CD8-positive, alpha-beta T cell (primary cell): ENCODE measurements at regions of chr9 and their contacts with region 1.

Region 1: DNA sequence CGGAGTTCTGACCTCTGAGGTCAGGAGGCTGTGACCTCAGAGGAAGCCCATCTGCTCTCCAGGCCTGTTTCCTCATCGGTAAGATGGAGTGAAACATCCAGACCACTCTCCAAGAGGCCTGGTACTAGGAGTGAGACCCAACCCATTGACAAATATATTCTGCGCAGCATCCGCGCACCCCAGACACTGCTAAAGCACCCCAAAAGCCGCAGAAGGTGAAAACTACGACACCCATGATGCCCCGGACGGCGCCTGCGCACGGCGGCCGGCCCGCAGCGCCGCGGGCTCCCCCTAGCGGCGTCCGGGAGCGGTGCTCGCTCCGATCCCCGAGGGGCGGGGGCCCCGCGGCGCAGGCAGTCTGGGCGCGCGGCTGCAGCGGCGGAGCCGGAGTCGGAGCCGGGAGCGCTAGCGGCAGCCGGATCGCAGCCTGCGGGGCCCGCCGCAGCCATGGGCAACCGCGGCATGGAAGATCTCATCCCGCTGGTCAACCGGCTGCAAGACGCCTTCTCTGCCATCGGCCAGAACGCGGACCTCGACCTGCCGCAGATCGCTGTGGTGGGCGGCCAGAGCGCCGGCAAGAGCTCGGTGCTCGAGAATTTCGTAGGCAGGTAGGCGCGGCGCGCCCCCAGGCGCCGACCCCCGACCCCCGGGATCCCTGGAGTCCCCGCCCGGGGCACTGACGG is at the start of gene DNM1:
- DNase-seq: peak; percentile 52 to 88 (median 67)
- ATAC-seq: peak; percentile 99
- H3K4me3 ChIP-seq: peak within 1 kb of the TSS; percentile 55 to 66
- H3K4me3 Mint-ChIP-seq: peak within 1 kb of the TSS; percentile 72
- H3K27ac ChIP-seq: no peak within 1 kb of the TSS
- H3K27ac Mint-ChIP-seq: no peak within 1 kb of the TSS
- H3K4me1 ChIP-seq: peaks cover 13% of the 10 kb centered on the region
- H3K4me1 Mint-ChIP-seq: peaks cover 9% of the 10 kb centered on the region
- H3K27me3 ChIP-seq: peaks cover 3 to 9% of the 10 kb centered on the region in 2 experiments
- H3K27me3 Mint-ChIP-seq: peaks cover 10% of the 10 kb centered on the region
- CTCF ChIP-seq: peak; percentile 85
- total RNA-seq, gene DNM1: 1.4 to 1.5 TPM

Region 2: GRCh38 chr9:127930231-127931091 is 272.7 kb before region 1 on chr9 and contains the start of gene PIP5KL1:
- CTCF ChIA-PET with region 1: no interaction called
- POLR2A ChIA-PET with region 1: no interaction called
- intact Hi-C with region 1: no loop called
- DNase-seq: peak; percentile 45 to 83 (median 68)
- ATAC-seq: peak; percentile 60
- H3K4me3 ChIP-seq: peak within 1 kb of the TSS; percentile 40 to 53
- H3K4me3 Mint-ChIP-seq: peak within 1 kb of the TSS; percentile 69
- H3K27ac ChIP-seq: no peak within 1 kb of the TSS
- H3K27ac Mint-ChIP-seq: peak within 1 kb of the TSS; percentile 71
- H3K4me1 ChIP-seq: peaks cover 36% of the 10 kb centered on the region
- H3K4me1 Mint-ChIP-seq: peaks cover 35% of the 10 kb centered on the region
- H3K27me3 ChIP-seq: peaks cover 0 to 5% of the 10 kb centered on the region in 2 experiments
- H3K27me3 Mint-ChIP-seq: no peaks in the 10 kb centered on the region
- CTCF ChIP-seq: no peak
- total RNA-seq, gene PIP5KL1: 5.1 to 7.4 TPM

Region 3: GRCh38 chr9:127963359-127964064 is 239.7 kb before region 1 on chr9:
- CTCF ChIA-PET with region 1: no interaction called
- POLR2A ChIA-PET with region 1: no interaction called
- intact Hi-C with region 1: loop called in 1 of 2 experiments (anchors 5 kb)
- DNase-seq: peak in 1 of 9 experiments; percentile 50
- ATAC-seq: peak; percentile 12
- H3K4me3 ChIP-seq: peak overlapping the region in 1 of 2 experiments; percentile 42
- H3K4me3 Mint-ChIP-seq: peak overlapping the region; percentile 88
- H3K27ac ChIP-seq: peak overlapping the region; percentile 25 to 49
- H3K27ac Mint-ChIP-seq: peak overlapping the region; percentile 99
- H3K4me1 ChIP-seq: peaks cover 100% of the 10 kb centered on the region
- H3K4me1 Mint-ChIP-seq: peaks cover 96% of the 10 kb centered on the region
- H3K27me3 ChIP-seq: no peaks in the 10 kb centered on the region
- H3K27me3 Mint-ChIP-seq: no peaks in the 10 kb centered on the region
- CTCF ChIP-seq: no peak

Region 4: DNA sequence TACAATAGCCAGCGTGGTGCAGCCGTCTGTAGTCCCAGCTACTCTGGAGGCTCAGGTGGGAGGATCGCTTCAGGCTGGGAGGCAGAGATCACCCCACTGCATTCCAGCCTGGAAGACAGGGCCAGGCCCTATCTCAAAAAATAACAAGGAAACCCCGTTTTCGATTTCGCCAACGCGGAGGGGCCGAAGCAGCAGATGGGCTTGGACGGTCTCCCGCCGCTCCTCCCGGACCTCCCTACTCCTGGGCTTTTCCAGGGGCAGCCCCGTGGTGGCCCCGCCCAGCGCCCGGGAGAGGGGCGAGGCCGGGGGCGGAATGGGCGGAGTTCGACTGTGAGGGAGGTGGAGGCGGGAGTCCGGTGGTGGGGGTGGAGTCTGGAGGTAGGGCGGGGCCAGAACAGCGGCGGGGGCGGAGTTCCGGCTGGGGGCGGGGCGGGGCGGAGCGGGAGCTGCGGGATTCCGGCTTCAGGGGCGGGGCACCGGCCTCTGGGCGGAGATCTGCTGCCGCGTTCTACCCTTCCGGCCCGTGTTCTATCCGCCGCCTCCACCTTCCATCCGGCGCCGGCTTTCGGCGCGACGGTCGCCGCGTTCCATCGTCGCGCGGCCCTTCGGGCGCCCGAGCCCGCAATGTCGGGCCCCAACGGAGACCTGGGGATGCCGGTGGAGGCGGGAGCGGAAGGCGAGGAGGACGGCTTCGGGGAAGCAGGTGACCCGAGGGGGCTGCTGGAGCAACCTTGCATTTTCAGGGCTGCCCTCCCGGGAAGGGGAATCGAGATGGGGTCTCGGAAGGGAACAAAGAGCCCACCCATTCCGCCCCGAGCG is 43.2 kb before region 1 on chr9 and contains the start of gene BBLN:
- CTCF ChIA-PET with region 1: interaction called, 3 read pairs
- POLR2A ChIA-PET with region 1: no interaction called
- intact Hi-C with region 1: loop called (anchors 1 kb)
- DNase-seq: peak; percentile 87 to 95 (median 93)
- ATAC-seq: peak; percentile 87
- H3K4me3 ChIP-seq: peak within 1 kb of the TSS; percentile 90 to 94
- H3K4me3 Mint-ChIP-seq: peak within 1 kb of the TSS; percentile 79
- H3K27ac ChIP-seq: peak within 1 kb of the TSS; percentile 70 to 86
- H3K27ac Mint-ChIP-seq: peak within 1 kb of the TSS; percentile 90
- H3K4me1 ChIP-seq: peaks cover 19% of the 10 kb centered on the region
- H3K4me1 Mint-ChIP-seq: peaks cover 17% of the 10 kb centered on the region
- H3K27me3 ChIP-seq: no peaks in the 10 kb centered on the region
- H3K27me3 Mint-ChIP-seq: no peaks in the 10 kb centered on the region
- CTCF ChIP-seq: no peak
- total RNA-seq, gene BBLN: 56.6 to 67.4 TPM

Region 5: DNA sequence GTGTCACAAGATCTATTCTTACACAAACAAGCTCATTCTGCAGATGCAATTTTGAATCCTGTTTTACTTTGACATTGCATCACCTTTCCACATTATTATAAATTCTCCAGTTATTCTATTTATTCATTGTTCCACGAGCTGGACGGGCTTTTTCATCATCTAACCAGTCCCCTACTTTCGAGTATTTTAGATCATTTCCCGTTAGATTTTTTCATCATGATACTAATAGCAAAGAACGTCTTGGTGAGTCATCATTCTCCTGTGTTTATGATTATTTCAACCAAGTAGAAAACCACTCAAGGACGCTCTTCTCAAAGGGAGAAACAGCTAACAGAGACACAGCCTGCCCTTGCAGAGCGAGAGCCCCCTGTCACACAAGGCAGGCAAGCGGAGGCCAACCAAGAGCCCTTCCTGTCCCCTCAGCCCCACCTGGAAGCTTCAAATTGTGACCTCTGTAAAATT is 28.0 kb before region 1 on chr9:
- CTCF ChIA-PET with region 1: no interaction called
- POLR2A ChIA-PET with region 1: no interaction called
- intact Hi-C with region 1: no loop called
- DNase-seq: no peak
- ATAC-seq: no peak
- H3K4me3 ChIP-seq: no peak overlapping the region
- H3K4me3 Mint-ChIP-seq: no peak overlapping the region
- H3K27ac ChIP-seq: no peak overlapping the region
- H3K27ac Mint-ChIP-seq: no peak overlapping the region
- H3K4me1 ChIP-seq: no peaks in the 10 kb centered on the region
- H3K4me1 Mint-ChIP-seq: no peaks in the 10 kb centered on the region
- H3K27me3 ChIP-seq: no peaks in the 10 kb centered on the region
- H3K27me3 Mint-ChIP-seq: no peaks in the 10 kb centered on the region
- CTCF ChIP-seq: no peak

Region 6: DNA sequence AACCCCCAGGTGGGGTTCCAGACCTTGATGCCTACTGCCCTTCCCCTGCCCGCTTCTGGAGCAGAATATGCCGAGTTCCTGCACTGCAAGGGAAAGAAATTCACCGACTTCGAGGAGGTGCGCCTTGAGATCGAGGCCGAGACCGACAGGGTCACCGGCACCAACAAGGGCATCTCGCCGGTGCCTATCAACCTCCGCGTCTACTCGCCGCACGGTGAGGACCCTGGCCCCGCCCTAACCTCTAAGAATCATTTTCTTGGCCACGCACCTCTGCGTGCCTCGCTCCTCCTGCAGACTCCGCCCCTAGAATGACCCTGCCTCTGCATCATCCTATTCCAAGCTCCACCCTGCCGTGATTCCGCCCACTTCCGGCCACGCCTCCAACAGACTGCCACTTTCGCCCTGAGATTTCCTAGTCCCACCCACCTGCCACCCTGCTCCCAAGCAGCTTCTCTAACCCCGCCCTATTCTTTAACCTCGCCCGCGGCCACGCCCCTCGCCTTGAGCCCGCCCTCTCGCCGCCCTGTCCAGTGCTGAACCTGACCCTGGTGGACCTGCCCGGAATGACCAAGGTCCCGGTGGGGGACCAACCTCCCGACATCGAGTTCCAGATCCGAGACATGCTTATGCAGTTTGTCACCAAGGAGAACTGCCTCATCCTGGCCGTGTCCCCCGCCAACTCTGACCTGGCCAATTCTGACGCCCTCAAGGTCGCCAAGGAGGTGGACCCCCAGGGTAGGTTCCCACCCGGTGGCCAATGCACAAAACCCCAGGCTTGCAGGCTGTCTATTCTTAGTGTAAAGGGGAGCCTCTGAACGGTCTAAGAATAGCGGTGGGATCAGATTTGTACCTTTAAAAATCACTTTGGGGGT is 15.6 kb after region 1 on chr9:
- CTCF ChIA-PET with region 1: interaction called, 4 read pairs
- POLR2A ChIA-PET with region 1: no interaction called
- intact Hi-C with region 1: loop called in 1 of 2 experiments (anchors 1 kb)
- DNase-seq: peak; percentile 80 to 94 (median 90)
- ATAC-seq: peak; percentile 96
- H3K4me3 ChIP-seq: peak overlapping the region; percentile 57 to 64
- H3K4me3 Mint-ChIP-seq: peak overlapping the region; percentile 77
- H3K27ac ChIP-seq: no peak overlapping the region
- H3K27ac Mint-ChIP-seq: peak overlapping the region; percentile 19
- H3K4me1 ChIP-seq: peaks cover 14% of the 10 kb centered on the region
- H3K4me1 Mint-ChIP-seq: peaks cover 11% of the 10 kb centered on the region
- H3K27me3 ChIP-seq: no peaks in the 10 kb centered on the region
- H3K27me3 Mint-ChIP-seq: peaks cover 4% of the 10 kb centered on the region
- CTCF ChIP-seq: no peak

Region 7: DNA sequence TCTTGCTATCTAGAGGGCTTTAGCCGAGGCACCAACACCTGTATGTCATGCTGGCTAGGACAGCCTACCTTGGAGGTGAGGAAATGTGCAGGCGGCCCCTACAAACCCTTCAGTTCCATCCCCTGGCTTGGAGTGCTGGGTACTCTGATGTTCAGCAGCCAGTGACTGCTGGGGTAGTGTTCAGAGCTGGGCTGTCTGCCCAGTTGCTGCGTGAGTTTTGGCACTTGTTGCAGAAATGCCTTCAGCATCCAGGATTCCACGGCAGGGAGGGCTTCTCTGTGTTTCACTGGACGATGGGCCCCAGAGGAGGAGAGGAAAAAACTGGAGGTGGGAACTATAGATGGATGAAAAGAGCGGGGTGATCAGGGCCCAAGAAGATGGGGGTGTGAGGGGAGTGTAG is 83.3 kb after region 1 on chr9:
- CTCF ChIA-PET with region 1: no interaction called
- POLR2A ChIA-PET with region 1: no interaction called
- intact Hi-C with region 1: no loop called
- DNase-seq: no peak
- ATAC-seq: no peak
- H3K4me3 ChIP-seq: no peak overlapping the region
- H3K4me3 Mint-ChIP-seq: no peak overlapping the region
- H3K27ac ChIP-seq: no peak overlapping the region
- H3K27ac Mint-ChIP-seq: no peak overlapping the region
- H3K4me1 ChIP-seq: no peaks in the 10 kb centered on the region
- H3K4me1 Mint-ChIP-seq: no peaks in the 10 kb centered on the region
- H3K27me3 ChIP-seq: no peaks in the 10 kb centered on the region
- H3K27me3 Mint-ChIP-seq: no peaks in the 10 kb centered on the region
- CTCF ChIP-seq: no peak

Region 8: GRCh38 chr9:128370826-128371621 is 167.9 kb after region 1 on chr9 and contains the start of gene URM1:
- CTCF ChIA-PET with region 1: no interaction called
- POLR2A ChIA-PET with region 1: no interaction called
- intact Hi-C with region 1: loop called in 1 of 2 experiments (anchors 1 kb)
- DNase-seq: peak; percentile 91 to 98 (median 96)
- ATAC-seq: peak; percentile 90
- H3K4me3 ChIP-seq: peak within 1 kb of the TSS; percentile 84 to 95
- H3K4me3 Mint-ChIP-seq: peak within 1 kb of the TSS; percentile 97
- H3K27ac ChIP-seq: peak within 1 kb of the TSS; percentile 76 to 96
- H3K27ac Mint-ChIP-seq: peak within 1 kb of the TSS; percentile 98
- H3K4me1 ChIP-seq: peaks cover 16% of the 10 kb centered on the region
- H3K4me1 Mint-ChIP-seq: peaks cover 43% of the 10 kb centered on the region
- H3K27me3 ChIP-seq: no peaks in the 10 kb centered on the region
- H3K27me3 Mint-ChIP-seq: no peaks in the 10 kb centered on the region
- CTCF ChIP-seq: no peak
- total RNA-seq, gene URM1: 30.4 to 31.5 TPM